Endothelial cell of umbilical vein (primary cell): ENCODE measurements at regions of chr18 and their contacts with region 1.

Region 1: DNA sequence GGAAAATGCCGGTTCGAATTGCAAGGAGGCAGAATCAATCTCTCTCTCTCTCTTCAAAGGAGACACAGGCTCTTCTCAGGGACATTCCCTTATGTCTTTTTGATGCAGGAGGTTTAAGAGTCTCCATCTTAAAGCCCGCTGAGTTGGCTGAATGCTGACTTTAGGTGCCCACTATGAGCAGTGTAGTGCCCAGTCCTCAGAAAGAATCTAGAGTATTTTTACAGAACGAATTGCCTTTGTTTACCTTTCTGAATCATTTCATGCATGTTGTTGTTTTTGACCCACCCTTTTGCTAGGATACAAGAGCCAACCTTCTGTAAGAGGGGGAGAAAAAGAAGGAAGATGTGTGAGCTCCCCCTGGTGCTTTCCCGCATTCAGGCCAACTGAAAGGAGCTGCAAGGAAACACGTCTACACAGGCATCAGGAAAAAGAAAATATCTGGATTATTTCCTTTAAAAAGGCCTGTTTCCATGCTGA is 193.5 kb upstream of the TCF4 start:
- DNase-seq: peak; percentile 90
- H3K4me3 ChIP-seq: no peak overlapping the region
- H3K27ac ChIP-seq: peak overlapping the region; percentile 47
- H3K4me1 ChIP-seq: peaks cover 27% of the 10 kb centered on the region
- H3K27me3 ChIP-seq: no peaks in the 10 kb centered on the region
- CTCF ChIP-seq: peak; percentile 75 to 85
- POLR2A ChIP-seq: no peak

Region 2: GRCh38 chr18:55096261-55096951 is 685.1 kb before region 1 on chr18:
- CTCF ChIA-PET with region 1: interaction called, 4 read pairs
- POLR2A ChIA-PET with region 1: no interaction called
- dilution Hi-C with region 1: no loop called
- intact Hi-C with region 1: loop called (anchors 2 kb)
- DNase-seq: peak; percentile 64
- H3K4me3 ChIP-seq: no peak overlapping the region
- H3K27ac ChIP-seq: peak overlapping the region; percentile 80
- H3K4me1 ChIP-seq: peaks cover 39% of the 10 kb centered on the region
- H3K27me3 ChIP-seq: peaks cover 0 to 8% of the 10 kb centered on the region in 2 experiments
- CTCF ChIP-seq: peak; percentile 46 to 59
- POLR2A ChIP-seq: no peak

Region 3: DNA sequence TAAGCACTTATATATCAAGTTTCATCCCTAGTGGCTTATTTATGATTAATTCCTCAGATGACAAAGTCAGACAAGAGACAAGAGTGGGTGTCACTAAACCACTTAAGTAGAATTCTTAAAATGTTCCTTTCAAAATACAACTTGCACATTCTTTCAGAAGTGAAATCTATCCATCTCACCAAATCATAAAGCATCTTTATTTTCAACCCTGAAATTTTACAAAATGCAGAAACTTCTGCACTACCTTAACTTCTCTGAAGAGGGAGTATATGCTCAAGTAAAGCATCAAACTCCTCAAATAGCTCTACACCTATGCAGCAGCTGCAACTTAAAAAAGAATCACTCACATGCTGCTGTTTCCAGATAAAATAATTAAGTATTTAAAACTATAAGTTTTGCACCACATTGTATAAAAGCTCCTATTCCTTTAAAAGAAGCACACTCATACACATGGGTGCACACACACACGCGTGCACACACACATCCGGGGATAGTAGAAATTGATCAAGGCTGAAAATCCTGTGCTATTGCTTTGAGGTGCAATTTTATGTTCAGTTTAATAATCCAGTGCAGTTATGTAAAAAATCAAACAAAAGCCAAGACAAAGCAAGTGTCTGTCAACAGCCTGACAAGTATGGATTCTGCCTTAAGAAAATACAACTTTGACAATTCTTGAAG is 438.0 kb before region 1 on chr18:
- CTCF ChIA-PET with region 1: interaction called, 42 read pairs
- POLR2A ChIA-PET with region 1: no interaction called
- dilution Hi-C with region 1: no loop called
- intact Hi-C with region 1: loop called (anchors 1 kb)
- DNase-seq: peak; percentile 46
- H3K4me3 ChIP-seq: no peak overlapping the region
- H3K27ac ChIP-seq: no peak overlapping the region
- H3K4me1 ChIP-seq: peaks cover 26% of the 10 kb centered on the region
- H3K27me3 ChIP-seq: no peaks in the 10 kb centered on the region
- CTCF ChIP-seq: peak; percentile 9 to 24
- POLR2A ChIP-seq: no peak

Region 4: DNA sequence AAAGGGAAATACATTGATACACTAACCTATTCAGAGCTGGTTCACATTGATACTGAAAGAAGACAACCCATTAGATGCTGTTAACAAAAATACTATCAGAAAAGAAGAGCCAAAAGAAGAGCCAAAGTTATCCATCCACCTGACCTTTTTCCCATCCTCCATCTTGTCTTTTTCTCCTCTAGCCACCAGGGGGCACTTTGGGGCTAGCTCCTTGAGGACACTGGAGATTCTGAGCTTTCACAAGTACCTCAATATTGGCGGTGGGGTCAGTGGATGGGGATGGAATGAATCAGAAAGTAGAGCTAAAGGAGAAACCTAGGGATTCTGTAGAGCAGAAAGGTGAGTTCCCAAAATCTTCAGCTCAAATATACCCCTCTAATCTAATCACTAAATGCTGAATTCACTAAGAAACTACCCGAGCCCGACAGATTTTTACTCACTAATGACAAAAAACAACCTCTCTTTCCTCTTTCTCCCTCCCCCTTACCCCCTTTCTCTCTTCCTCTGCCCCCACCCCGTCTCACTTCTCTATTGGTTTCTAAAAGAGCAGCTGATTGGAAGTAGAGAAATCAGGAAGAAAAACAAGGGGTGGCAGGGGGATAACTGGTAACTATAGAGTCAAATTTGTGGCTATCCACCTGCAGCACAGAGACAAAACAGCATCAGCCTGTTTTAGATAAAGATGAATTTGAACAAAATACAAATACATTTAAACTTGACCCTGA is 396.8 kb before region 1 on chr18:
- CTCF ChIA-PET with region 1: interaction called, 65 read pairs
- POLR2A ChIA-PET with region 1: no interaction called
- dilution Hi-C with region 1: no loop called
- intact Hi-C with region 1: loop called (anchors 1 kb)
- DNase-seq: peak; percentile 67
- H3K4me3 ChIP-seq: no peak overlapping the region
- H3K27ac ChIP-seq: no peak overlapping the region
- H3K4me1 ChIP-seq: peaks cover 39% of the 10 kb centered on the region
- H3K27me3 ChIP-seq: no peaks in the 10 kb centered on the region
- CTCF ChIP-seq: peak; percentile 69 to 74
- POLR2A ChIP-seq: no peak

Region 5: GRCh38 chr18:55415258-55415871 is 366.2 kb before region 1 on chr18:
- CTCF ChIA-PET with region 1: interaction called, 54 read pairs
- POLR2A ChIA-PET with region 1: no interaction called
- dilution Hi-C with region 1: no loop called
- intact Hi-C with region 1: loop called (anchors 1 kb)
- DNase-seq: peak; percentile 90
- H3K4me3 ChIP-seq: no peak overlapping the region
- H3K27ac ChIP-seq: peak overlapping the region; percentile 13
- H3K4me1 ChIP-seq: peaks cover 45% of the 10 kb centered on the region
- H3K27me3 ChIP-seq: no peaks in the 10 kb centered on the region
- CTCF ChIP-seq: peak; percentile 79 to 91
- POLR2A ChIP-seq: no peak

Region 6: DNA sequence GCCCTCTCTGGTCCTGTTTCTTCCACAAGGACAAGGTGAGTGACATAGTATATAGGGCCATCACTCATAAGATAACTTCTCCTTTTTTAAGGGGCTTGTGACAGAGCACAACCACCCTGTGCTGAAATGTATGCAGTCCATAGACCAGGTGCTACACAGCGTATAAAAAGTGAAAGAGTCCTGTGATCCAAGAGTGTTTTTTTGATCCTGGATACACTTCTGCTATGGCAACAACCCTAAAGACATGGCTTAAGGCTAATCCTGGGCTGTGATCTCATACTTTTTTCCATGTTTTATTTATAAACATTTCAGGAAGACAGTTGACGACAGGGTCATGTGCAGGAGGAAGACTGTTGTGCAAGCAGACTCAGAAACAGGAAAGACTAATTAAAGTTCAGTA is 207.0 kb after region 1 on chr18:
- CTCF ChIA-PET with region 1: no interaction called
- POLR2A ChIA-PET with region 1: no interaction called
- dilution Hi-C with region 1: no loop called
- intact Hi-C with region 1: loop called (anchors 2 kb)
- DNase-seq: peak; percentile 94
- H3K4me3 ChIP-seq: no peak overlapping the region
- H3K27ac ChIP-seq: peak overlapping the region; percentile 81
- H3K4me1 ChIP-seq: peaks cover 10% of the 10 kb centered on the region
- H3K27me3 ChIP-seq: no peaks in the 10 kb centered on the region
- CTCF ChIP-seq: no peak
- POLR2A ChIP-seq: no peak

Region 7: DNA sequence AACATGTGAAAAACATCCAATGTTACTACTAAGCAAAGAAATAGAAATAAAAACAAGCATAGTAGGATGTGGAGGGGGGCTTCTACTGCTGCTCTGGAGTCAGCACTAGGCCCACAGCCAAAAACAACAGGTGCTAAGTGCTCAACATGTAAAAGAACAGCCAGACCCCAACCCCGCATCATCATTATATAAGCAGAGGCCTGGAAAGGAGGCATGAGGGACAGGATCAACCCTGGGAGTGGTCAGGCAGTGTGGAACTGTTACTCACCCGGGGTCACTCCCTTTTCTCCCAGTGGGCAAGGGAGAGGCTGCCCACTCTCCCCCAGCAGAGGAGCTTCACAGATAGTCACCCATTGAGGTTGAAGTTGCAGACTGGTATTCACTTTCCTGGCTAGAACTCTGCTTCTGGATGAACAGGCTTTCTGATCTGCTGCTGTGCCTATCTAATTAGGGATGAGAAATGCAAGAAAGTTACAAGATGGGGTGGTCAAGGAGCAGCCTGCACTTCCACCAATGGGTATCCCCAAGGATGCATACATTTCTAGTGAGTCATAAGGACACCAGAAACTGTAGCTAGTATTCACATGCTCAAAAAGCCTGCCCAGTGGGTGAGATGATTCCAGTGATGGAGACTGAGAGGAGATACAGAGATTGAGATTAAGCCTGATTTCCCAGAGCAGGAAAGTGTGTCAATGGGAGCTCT is 286.6 kb after region 1 on chr18:
- CTCF ChIA-PET with region 1: no interaction called
- POLR2A ChIA-PET with region 1: no interaction called
- dilution Hi-C with region 1: no loop called
- intact Hi-C with region 1: no loop called
- DNase-seq: peak; percentile 9
- H3K4me3 ChIP-seq: no peak overlapping the region
- H3K27ac ChIP-seq: no peak overlapping the region
- H3K4me1 ChIP-seq: no peaks in the 10 kb centered on the region
- H3K27me3 ChIP-seq: peaks cover 0 to 2% of the 10 kb centered on the region in 2 experiments
- CTCF ChIP-seq: no peak
- POLR2A ChIP-seq: no peak

Region 8: GRCh38 chr18:56083097-56083521 is 301.6 kb after region 1 on chr18:
- CTCF ChIA-PET with region 1: interaction called, 4 read pairs
- POLR2A ChIA-PET with region 1: no interaction called
- dilution Hi-C with region 1: no loop called
- intact Hi-C with region 1: loop called (anchors 2 kb)
- DNase-seq: peak; percentile 99
- H3K4me3 ChIP-seq: no peak overlapping the region
- H3K27ac ChIP-seq: peak overlapping the region; percentile 95
- H3K4me1 ChIP-seq: peaks cover 26% of the 10 kb centered on the region
- H3K27me3 ChIP-seq: no peaks in the 10 kb centered on the region
- CTCF ChIP-seq: peak; percentile 24 to 46
- POLR2A ChIP-seq: peak; percentile 71